ENCODE measurements at regions of chrX and their contacts with region 1.

Region 1: GRCh38 chrX:74343343-74344279 is 39.6 kb downstream of the ZCCHC13 start:
- DNase-seq: peak; percentile 61
- ATAC-seq: peak; percentile 65
- H3K4me3 ChIP-seq: no peak overlapping the region
- H3K4me3 Mint-ChIP-seq: no peak overlapping the region
- H3K27ac ChIP-seq: no peak overlapping the region
- H3K27ac Mint-ChIP-seq: no peak overlapping the region
- H3K4me1 ChIP-seq: peaks cover 0 to 7% of the 10 kb centered on the region in 2 donors
- H3K4me1 Mint-ChIP-seq: peaks cover 8% of the 10 kb centered on the region
- H3K27me3 ChIP-seq: no peaks in the 10 kb centered on the region
- H3K27me3 Mint-ChIP-seq: peaks cover 4% of the 10 kb centered on the region
- CTCF ChIP-seq: peak; percentile 65

Region 2: DNA sequence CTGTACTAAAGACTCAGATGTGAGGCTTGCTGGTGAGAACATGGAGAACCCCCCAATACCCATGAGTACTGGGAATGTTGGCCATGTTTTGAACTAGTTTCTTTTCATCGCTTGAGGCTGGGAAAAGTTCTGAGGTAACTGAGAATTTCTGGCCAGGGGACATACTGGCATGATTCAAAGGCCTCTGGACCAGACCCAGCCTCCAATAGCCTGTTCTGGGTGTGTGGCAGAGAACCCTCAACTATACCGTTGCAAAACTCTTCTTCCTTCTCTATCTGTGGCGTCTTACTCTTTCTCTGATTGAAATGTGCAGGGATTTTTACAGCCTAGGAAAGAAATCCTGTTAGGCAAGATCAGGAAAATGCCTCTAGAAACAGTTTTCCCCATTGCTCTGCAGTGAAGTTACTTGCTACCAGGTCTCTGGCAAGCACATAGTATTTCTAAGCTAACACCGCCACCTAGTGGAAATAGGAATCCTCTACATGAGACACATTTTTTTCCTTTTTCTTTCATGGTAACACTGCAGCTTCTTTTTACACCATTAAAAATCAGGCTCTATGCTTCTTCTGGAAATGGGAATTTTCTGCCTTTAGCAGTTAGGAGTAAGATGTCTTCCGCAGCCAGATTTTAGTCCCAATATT is 210.3 kb before region 1 on chrX:
- CTCF ChIA-PET with region 1: interaction called, 3 read pairs
- POLR2A ChIA-PET with region 1: no interaction called
- intact Hi-C with region 1: loop called (anchors 10 kb)
- DNase-seq: peak; percentile 49
- ATAC-seq: no peak
- H3K4me3 ChIP-seq: no peak overlapping the region
- H3K4me3 Mint-ChIP-seq: no peak overlapping the region
- H3K27ac ChIP-seq: no peak overlapping the region
- H3K27ac Mint-ChIP-seq: no peak overlapping the region
- H3K4me1 ChIP-seq: no peaks in the 10 kb centered on the region
- H3K4me1 Mint-ChIP-seq: no peaks in the 10 kb centered on the region
- H3K27me3 ChIP-seq: no peaks in the 10 kb centered on the region
- H3K27me3 Mint-ChIP-seq: no peaks in the 10 kb centered on the region
- CTCF ChIP-seq: peak; percentile 72

Region 3: GRCh38 chrX:74232859-74233258 is 110.8 kb before region 1 on chrX:
- CTCF ChIA-PET with region 1: no interaction called
- POLR2A ChIA-PET with region 1: no interaction called
- intact Hi-C with region 1: loop called (anchors 5 kb)
- DNase-seq: no peak
- ATAC-seq: no peak
- H3K4me3 ChIP-seq: no peak overlapping the region
- H3K4me3 Mint-ChIP-seq: no peak overlapping the region
- H3K27ac ChIP-seq: no peak overlapping the region
- H3K27ac Mint-ChIP-seq: no peak overlapping the region
- H3K4me1 ChIP-seq: no peaks in the 10 kb centered on the region
- H3K4me1 Mint-ChIP-seq: peaks cover 1% of the 10 kb centered on the region
- H3K27me3 ChIP-seq: no peaks in the 10 kb centered on the region
- H3K27me3 Mint-ChIP-seq: no peaks in the 10 kb centered on the region
- CTCF ChIP-seq: no peak

Region 4: GRCh38 chrX:74395556-74395955 is 51.9 kb after region 1 on chrX:
- CTCF ChIA-PET with region 1: no interaction called
- POLR2A ChIA-PET with region 1: no interaction called
- intact Hi-C with region 1: no loop called
- DNase-seq: no peak
- ATAC-seq: no peak
- H3K4me3 ChIP-seq: no peak overlapping the region
- H3K4me3 Mint-ChIP-seq: no peak overlapping the region
- H3K27ac ChIP-seq: no peak overlapping the region
- H3K27ac Mint-ChIP-seq: no peak overlapping the region
- H3K4me1 ChIP-seq: no peaks in the 10 kb centered on the region
- H3K4me1 Mint-ChIP-seq: no peaks in the 10 kb centered on the region
- H3K27me3 ChIP-seq: no peaks in the 10 kb centered on the region
- H3K27me3 Mint-ChIP-seq: peaks cover 14% of the 10 kb centered on the region
- CTCF ChIP-seq: no peak

Region 5: DNA sequence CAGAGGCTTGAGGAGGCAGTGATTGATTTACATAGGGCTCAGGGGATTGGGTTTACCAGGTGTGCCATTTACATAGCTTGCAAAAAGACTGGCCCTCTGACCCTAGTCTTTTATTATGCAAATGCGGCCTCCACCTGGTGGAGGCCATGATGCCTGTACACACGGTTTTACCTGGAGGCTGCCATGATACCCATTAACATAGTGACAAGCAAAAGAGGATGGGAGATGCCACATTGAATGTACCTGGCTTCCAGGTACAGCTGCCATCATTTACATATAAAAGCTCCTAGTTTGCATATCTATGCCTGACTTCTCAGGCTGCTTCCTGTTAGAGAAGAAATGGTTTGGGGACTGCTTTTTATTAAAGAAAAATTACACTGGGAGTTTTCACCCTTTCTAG is 509.6 kb after region 1 on chrX:
- CTCF ChIA-PET with region 1: no interaction called
- POLR2A ChIA-PET with region 1: no interaction called
- intact Hi-C with region 1: no loop called
- DNase-seq: no peak
- ATAC-seq: no peak
- H3K4me3 ChIP-seq: no peak overlapping the region
- H3K4me3 Mint-ChIP-seq: no peak overlapping the region
- H3K27ac ChIP-seq: no peak overlapping the region
- H3K27ac Mint-ChIP-seq: no peak overlapping the region
- H3K4me1 ChIP-seq: no peaks in the 10 kb centered on the region
- H3K4me1 Mint-ChIP-seq: no peaks in the 10 kb centered on the region
- H3K27me3 ChIP-seq: no peaks in the 10 kb centered on the region
- H3K27me3 Mint-ChIP-seq: no peaks in the 10 kb centered on the region
- CTCF ChIP-seq: no peak

Region 6: DNA sequence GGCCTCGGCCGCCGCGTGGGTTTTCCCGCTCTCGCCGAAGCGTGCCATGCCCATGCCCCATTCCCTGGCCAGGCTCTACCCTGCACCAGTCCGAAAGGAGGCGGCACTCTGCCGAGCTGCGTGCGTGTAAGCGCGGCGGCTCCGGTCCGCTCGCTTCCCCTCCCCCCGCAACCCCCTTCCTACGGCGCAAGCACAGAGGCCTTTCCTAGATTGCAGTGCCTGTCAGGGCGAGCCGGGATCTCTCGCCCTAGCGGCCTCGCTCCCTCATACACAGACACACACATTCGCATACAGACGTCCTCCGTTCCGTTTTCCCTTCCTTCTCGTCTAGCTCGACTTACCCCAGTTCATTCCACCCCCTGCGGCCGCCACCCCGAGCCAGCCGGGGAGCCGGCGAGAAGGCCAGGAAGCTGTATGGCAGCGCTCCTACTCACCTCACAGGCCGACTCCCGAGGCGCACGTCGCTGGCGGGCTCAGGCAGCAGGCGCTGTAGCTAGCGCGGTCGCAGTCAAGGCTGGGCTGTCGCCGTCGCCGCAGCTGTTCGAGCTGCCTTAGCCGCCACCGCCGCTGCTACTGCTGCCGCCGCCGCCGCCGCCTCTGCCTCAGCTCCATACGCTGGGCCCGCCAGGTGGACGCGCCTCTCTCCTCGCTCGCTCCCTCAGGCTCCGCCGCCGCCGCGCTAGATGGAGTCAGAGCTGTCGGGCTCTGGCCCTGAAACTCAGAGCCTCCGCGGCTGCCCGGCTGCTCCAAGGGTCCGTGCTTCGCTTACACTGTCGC is 581.0 kb after region 1 on chrX:
- CTCF ChIA-PET with region 1: no interaction called
- POLR2A ChIA-PET with region 1: no interaction called
- intact Hi-C with region 1: no loop called
- DNase-seq: peak; percentile 53
- ATAC-seq: peak; percentile 52
- H3K4me3 ChIP-seq: peak overlapping the region in 4 of 5 experiments; percentile 24 to 56 (median 43)
- H3K4me3 Mint-ChIP-seq: peak overlapping the region; percentile 95
- H3K27ac ChIP-seq: no peak overlapping the region
- H3K27ac Mint-ChIP-seq: peak overlapping the region; percentile 91
- H3K4me1 ChIP-seq: peaks cover 11% of the 10 kb centered on the region in 2 donors
- H3K4me1 Mint-ChIP-seq: peaks cover 18% of the 10 kb centered on the region
- H3K27me3 ChIP-seq: peaks cover 0 to 4% (median 1%) of the 10 kb centered on the region in 4 experiments
- H3K27me3 Mint-ChIP-seq: peaks cover 7% of the 10 kb centered on the region
- CTCF ChIP-seq: no peak